ENCODE measurements at regions of chr20 and their contacts with region 1.

Region 1: GRCh38 chr20:2093159-2093781 is 8.4 kb upstream of the STK35 start:
- DNase-seq: no peak
- ATAC-seq: no peak

Region 2: GRCh38 chr20:1973601-1974440 is 119.4 kb before region 1 on chr20:
- intact Hi-C with region 1: loop called (anchors 5 kb)
- DNase-seq: no peak
- ATAC-seq: no peak

Region 3: DNA sequence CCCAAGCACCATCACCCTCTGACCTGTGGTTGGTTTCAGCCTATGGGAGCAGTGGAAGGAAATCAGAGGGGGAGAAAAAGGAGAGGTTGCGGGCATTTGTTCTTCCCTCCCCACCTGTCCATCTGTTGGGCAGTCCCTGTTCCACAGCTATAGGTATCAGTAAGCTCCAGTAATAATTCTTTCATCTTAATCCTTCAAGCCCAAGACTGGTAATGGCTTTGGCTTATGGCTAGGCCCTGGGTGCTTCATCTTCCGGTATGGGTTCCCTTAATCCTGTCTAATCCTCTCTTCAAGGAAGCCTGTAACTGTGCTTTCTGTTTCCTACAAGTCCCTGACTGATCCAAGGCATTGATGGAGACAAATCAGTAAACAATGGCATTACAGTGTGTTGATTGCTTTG is 33.9 kb before region 1 on chr20:
- intact Hi-C with region 1: no loop called
- DNase-seq: no peak
- ATAC-seq: no peak